Activated CD4-positive, alpha-beta T cell treated with anti-CD3 and anti-CD28 coated beads, Interleukin-2, amount 10 ng/mL, durations not matched to agents 24 days and 14 days (primary cell): ENCODE measurements at regions of chr2 and their contacts with region 1.

Region 1: GRCh38 chr2:170928824-170929685 is at the start of gene GORASP2:
- DNase-seq: peak; percentile 99
- H3K4me3 Mint-ChIP-seq: peak within 1 kb of the TSS; percentile 92
- H3K27ac Mint-ChIP-seq: peak within 1 kb of the TSS; percentile 97
- H3K4me1 Mint-ChIP-seq: peaks cover 32% of the 10 kb centered on the region
- H3K27me3 Mint-ChIP-seq: no peaks in the 10 kb centered on the region
- total RNA-seq, gene GORASP2: 93.0 and 96.7 TPM in 2 replicates

Region 2: GRCh38 chr2:170878505-170878904 is 50.5 kb before region 1 on chr2:
- intact Hi-C with region 1: loop called (anchors 5 kb)
- DNase-seq: peak; percentile 61
- H3K4me3 Mint-ChIP-seq: peak overlapping the region; percentile 49
- H3K27ac Mint-ChIP-seq: no peak overlapping the region
- H3K4me1 Mint-ChIP-seq: peaks cover 13% of the 10 kb centered on the region
- H3K27me3 Mint-ChIP-seq: peaks cover 23% of the 10 kb centered on the region

Region 3: GRCh38 chr2:170950221-170950761 is 21.2 kb after region 1 on chr2:
- intact Hi-C with region 1: no loop called
- DNase-seq: no peak
- H3K4me3 Mint-ChIP-seq: no peak overlapping the region
- H3K27ac Mint-ChIP-seq: no peak overlapping the region
- H3K4me1 Mint-ChIP-seq: peaks cover 5% of the 10 kb centered on the region
- H3K27me3 Mint-ChIP-seq: no peaks in the 10 kb centered on the region

Region 4: GRCh38 chr2:170984079-170984478 is 55.0 kb after region 1 on chr2:
- intact Hi-C with region 1: no loop called
- DNase-seq: no peak
- H3K4me3 Mint-ChIP-seq: no peak overlapping the region
- H3K27ac Mint-ChIP-seq: no peak overlapping the region
- H3K4me1 Mint-ChIP-seq: no peaks in the 10 kb centered on the region
- H3K27me3 Mint-ChIP-seq: peaks cover 4% of the 10 kb centered on the region

Region 5: DNA sequence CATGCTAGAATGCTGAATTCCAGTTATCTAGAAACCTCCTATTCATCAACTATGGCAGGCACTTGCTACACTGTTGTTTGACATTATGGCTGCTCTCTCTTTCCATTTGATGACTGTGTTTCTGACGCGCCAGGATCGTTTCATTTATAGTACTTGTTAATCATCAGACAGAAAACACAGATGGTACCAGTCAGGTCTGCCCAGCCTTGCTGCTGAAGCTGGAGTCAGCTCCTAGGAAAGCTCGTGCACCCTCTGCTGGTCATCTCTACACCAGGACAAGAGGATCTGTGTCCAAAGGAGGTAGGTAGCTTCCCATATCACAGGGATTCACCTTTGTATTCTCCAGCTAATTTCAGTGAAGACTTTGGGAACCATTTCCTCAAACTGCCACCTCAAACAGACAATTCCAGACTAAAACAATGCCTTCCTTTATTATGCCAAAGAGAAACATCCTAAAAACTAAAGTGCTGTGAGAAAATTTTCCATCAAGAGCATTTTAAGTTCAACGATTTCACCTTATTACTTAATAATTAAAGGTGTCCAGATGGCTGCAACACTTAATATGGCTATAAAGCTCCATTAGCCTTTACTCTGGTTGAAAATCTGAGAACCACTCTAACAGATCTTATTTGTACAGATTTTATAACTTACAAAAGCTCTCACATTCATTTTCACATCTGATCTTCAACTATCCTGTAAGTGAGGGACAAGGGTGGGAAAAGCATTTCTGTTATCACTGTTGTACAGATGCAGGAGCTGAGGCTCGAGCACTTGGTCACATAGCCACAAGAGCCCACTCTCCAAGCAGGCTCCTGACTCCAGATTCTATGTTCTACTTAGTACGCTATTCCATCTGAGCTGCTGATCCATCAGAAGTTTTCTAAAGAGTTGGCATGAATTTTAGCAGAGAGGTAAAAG is 487.2 kb after region 1 on chr2:
- intact Hi-C with region 1: loop called (anchors 1 kb)
- DNase-seq: peak; percentile 93
- H3K4me3 Mint-ChIP-seq: no peak overlapping the region
- H3K27ac Mint-ChIP-seq: peak overlapping the region; percentile 80
- H3K4me1 Mint-ChIP-seq: peaks cover 23% of the 10 kb centered on the region
- H3K27me3 Mint-ChIP-seq: no peaks in the 10 kb centered on the region

Region 6: GRCh38 chr2:171687287-171688128 is 758.5 kb after region 1 on chr2 and contains the start of gene DYNC1I2:
- intact Hi-C with region 1: loop called (anchors 5 kb)
- DNase-seq: peak; percentile 92
- H3K4me3 Mint-ChIP-seq: peak within 1 kb of the TSS; percentile 80
- H3K27ac Mint-ChIP-seq: peak within 1 kb of the TSS; percentile 47
- H3K4me1 Mint-ChIP-seq: peaks cover 13% of the 10 kb centered on the region
- H3K27me3 Mint-ChIP-seq: peaks cover 15% of the 10 kb centered on the region
- total RNA-seq, gene DYNC1I2: 49.7 and 55.1 TPM in 2 replicates